ENCODE measurements at regions of chr17 and their contacts with region 1.

Region 1: GRCh38 chr17:7825206-7825990 is 8.6 kb upstream of the KDM6B start:
- DNase-seq: no peak
- H3K4me3 ChIP-seq: no peak overlapping the region
- H3K27ac ChIP-seq: no peak overlapping the region
- H3K4me1 ChIP-seq: peaks cover 0 to 7% (median 5%) of the 10 kb centered on the region in 4 experiments; a peak in 5 of 7 replicates
- H3K27me3 ChIP-seq: peaks cover 0 to 18% (median 12%) of the 10 kb centered on the region in 4 experiments; a peak in 6 of 7 replicates
- CTCF ChIP-seq: peak in 1 of 3 experiments; percentile 17; a peak in 1 of 4 replicates
- EP300 ChIP-seq: no peak
- POLR2A ChIP-seq: no peak
- RAD21 ChIP-seq: no peak

Region 2: GRCh38 chr17:7811251-7811650 is 14.1 kb before region 1 on chr17:
- CTCF ChIA-PET with region 1: interaction called, 10 read pairs
- POLR2A ChIA-PET with region 1: interaction called, 3 read pairs
- DNase-seq: no peak
- H3K4me3 ChIP-seq: no peak overlapping the region
- H3K27ac ChIP-seq: no peak overlapping the region
- H3K4me1 ChIP-seq: no peaks in the 10 kb centered on the region
- H3K27me3 ChIP-seq: peaks cover 0 to 2% (median 0%) of the 10 kb centered on the region in 4 experiments; a peak in 1 of 7 replicates
- CTCF ChIP-seq: no peak
- EP300 ChIP-seq: no peak
- POLR2A ChIP-seq: no peak
- RAD21 ChIP-seq: no peak

Region 3: DNA sequence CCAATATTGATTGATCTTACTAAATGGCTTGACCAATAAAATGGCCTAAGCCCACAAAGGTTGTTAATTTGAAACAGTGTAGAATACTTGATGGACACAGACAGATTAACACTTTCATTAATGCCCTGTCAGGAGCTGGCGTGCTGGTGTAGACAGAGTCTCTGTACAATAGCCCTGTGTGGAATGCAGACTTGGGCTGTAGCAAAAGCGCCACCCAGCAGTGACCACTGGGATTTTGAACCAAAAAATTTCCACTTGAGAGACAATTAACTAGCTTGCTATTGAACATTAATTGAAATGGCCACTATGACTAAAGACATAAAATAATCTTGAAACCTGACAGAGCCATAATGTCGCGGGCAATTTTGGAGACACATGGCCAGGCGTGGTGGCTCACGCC is 157.3 kb after region 1 on chr17:
- CTCF ChIA-PET with region 1: interaction called, 12 read pairs
- POLR2A ChIA-PET with region 1: no interaction called
- DNase-seq: no peak
- H3K4me3 ChIP-seq: no peak overlapping the region
- H3K27ac ChIP-seq: no peak overlapping the region
- H3K4me1 ChIP-seq: no peaks in the 10 kb centered on the region
- H3K27me3 ChIP-seq: peaks cover 0 to 3% (median 0%) of the 10 kb centered on the region in 4 experiments; a peak in 1 of 7 replicates
- CTCF ChIP-seq: peak in 2 of 3 experiments; percentile 16 to 21; a peak in 2 of 4 replicates
- EP300 ChIP-seq: no peak
- POLR2A ChIP-seq: no peak
- RAD21 ChIP-seq: peak; percentile 28 to 51

Measured in H1 (cell line).